Caco-2 (cell line): ENCODE measurements at regions of chr18 and their contacts with region 1.

Region 1: DNA sequence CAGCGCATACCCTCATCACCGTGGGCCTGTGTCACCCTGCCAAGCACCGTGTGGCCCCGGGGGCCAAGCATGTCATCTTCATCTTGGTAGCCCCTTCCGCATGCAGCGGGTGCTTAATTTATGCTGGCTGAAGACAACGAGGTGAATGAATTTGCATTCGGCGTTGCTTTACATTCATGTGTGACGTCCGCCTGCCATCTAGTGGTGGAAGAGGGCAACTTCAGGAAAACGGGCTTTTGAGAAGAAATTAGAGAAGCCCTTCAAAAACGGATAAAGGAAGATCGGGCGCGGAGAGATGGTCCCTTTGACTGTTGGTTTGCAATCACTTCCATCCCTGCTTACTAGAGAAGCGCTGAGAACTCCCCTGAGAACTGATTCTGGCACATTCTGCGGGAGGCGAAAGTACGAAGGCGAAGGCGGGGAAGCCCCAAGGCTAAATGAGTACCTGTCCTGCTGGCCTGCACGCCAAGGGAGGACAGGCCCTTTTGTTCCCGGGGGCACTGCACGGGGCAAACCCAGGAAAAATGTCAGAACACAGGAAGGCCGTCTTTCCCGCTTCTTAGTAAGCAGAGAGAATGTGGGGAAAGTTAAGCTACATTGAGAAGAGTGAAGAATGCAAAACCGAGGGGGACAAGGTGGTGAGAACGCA is 145.9 kb downstream of the ZNF516 start:
- DNase-seq: peak; percentile 45 to 53
- H3K4me3 ChIP-seq: no peak overlapping the region
- H3K4me3 Mint-ChIP-seq: peak overlapping the region; percentile 63
- H3K27ac Mint-ChIP-seq: no peak overlapping the region
- H3K4me1 ChIP-seq: no peaks in the 10 kb centered on the region
- H3K4me1 Mint-ChIP-seq: peaks cover 8% of the 10 kb centered on the region
- H3K27me3 ChIP-seq: no peaks in the 10 kb centered on the region
- H3K27me3 Mint-ChIP-seq: peaks cover 5% of the 10 kb centered on the region
- CTCF ChIP-seq: peak; percentile 46 to 65

Region 2: DNA sequence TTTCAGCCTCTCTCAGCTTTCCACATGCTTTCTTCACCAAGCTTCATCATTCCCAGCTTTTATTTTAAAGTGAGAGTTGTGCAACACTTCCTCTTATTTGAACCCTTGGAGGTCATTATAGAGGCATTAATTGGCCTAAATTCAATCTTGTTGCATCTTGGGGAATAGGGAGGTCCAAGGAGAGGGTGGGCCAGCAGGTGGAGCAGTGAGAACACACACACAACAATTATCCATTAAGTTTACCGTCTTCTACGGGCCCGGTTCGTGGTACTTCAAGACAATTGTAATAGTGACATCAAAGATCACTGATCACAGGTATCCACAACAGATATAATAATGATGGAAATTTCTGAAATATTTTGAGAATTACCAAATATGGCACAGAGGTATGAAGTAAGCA is 464.5 kb before region 1 on chr18:
- CTCF ChIA-PET with region 1: no interaction called
- POLR2A ChIA-PET with region 1: no interaction called
- intact Hi-C with region 1: loop called (anchors 2 kb)
- DNase-seq: no peak
- H3K4me3 ChIP-seq: no peak overlapping the region
- H3K4me3 Mint-ChIP-seq: no peak overlapping the region
- H3K27ac Mint-ChIP-seq: no peak overlapping the region
- H3K4me1 ChIP-seq: no peaks in the 10 kb centered on the region
- H3K4me1 Mint-ChIP-seq: no peaks in the 10 kb centered on the region
- H3K27me3 ChIP-seq: no peaks in the 10 kb centered on the region
- H3K27me3 Mint-ChIP-seq: no peaks in the 10 kb centered on the region
- CTCF ChIP-seq: no peak

Region 3: DNA sequence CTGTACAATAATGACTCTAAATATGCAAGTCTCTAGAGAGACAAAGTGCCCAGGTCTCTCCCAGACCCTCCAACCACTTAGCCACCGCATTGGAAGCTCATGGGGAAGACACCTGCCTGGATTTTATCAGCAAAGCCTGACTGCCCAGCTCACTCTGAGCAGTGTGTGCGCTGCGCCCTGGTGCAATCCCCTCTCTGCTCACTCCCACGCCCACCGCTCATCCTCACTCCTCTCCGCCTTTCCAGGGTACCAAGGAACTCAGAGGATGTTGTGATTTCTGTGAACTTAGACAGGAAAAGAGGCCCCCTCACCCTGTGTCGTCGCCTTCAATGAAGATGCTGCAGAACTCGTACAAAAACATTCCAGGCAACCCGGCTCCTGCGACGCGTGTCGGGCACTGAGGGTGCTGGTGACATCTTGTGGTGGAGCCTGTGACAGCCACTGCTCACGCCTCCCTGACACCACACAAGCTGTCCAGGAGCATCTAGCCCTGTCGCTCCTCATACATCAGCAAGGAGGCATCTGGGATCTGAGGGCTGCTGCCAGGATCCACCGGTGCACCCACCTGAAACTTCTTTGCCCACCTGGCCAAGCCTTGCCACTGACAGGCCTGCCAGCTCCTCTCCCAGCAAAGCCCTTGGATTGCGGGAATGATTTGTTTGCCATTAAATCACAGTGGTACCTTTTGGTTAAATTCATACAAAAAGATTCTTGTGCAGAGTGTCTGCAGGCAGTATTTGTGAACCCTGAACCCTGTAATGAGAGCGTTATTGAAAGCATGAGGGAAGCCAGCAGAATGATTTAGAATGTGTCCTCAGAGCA is 74.5 kb before region 1 on chr18:
- CTCF ChIA-PET with region 1: no interaction called
- POLR2A ChIA-PET with region 1: no interaction called
- intact Hi-C with region 1: loop called (anchors 5 kb)
- DNase-seq: peak; percentile 24 to 35
- H3K4me3 ChIP-seq: no peak overlapping the region
- H3K4me3 Mint-ChIP-seq: no peak overlapping the region
- H3K27ac Mint-ChIP-seq: no peak overlapping the region
- H3K4me1 ChIP-seq: no peaks in the 10 kb centered on the region
- H3K4me1 Mint-ChIP-seq: no peaks in the 10 kb centered on the region
- H3K27me3 ChIP-seq: no peaks in the 10 kb centered on the region
- H3K27me3 Mint-ChIP-seq: peaks cover 4% of the 10 kb centered on the region
- CTCF ChIP-seq: peak in 1 of 2 experiments; percentile 37

Region 4: DNA sequence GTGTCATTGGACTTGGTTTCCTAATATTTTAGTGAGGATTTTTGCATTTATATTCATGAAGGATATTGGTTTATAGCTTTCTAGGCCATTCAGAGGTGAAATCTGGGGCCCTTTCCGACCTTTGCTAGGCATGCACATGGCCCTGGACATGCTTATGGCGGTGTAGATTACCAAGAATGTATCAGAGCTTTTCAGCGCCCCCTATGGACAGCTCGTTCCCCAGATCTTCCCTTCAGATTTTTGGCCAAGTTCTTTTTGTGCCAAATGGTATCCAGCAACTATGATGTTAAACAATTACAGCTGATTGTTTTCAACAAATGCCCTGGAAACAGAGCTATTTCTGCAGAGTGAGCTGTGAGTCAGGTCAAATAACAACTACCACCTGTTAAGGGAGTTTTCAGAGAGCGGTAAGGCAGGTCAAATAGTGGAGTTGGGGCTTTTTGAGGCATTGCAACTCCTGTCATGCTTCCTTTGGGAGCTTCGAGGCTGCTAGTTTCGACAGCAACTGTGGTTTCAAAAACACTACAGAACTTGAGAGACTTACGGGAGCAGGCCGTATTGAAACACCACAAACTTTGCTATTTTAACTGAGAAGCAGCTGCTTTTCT is 42.4 kb before region 1 on chr18:
- CTCF ChIA-PET with region 1: no interaction called
- POLR2A ChIA-PET with region 1: no interaction called
- intact Hi-C with region 1: no loop called
- DNase-seq: no peak
- H3K4me3 ChIP-seq: no peak overlapping the region
- H3K4me3 Mint-ChIP-seq: no peak overlapping the region
- H3K27ac Mint-ChIP-seq: no peak overlapping the region
- H3K4me1 ChIP-seq: no peaks in the 10 kb centered on the region
- H3K4me1 Mint-ChIP-seq: no peaks in the 10 kb centered on the region
- H3K27me3 ChIP-seq: no peaks in the 10 kb centered on the region
- H3K27me3 Mint-ChIP-seq: peaks cover 5% of the 10 kb centered on the region
- CTCF ChIP-seq: no peak